Left cardiac atrium (tissue), 4 donors: ENCODE measurements at regions of chr10 and their contacts with region 1.

Region 1: DNA sequence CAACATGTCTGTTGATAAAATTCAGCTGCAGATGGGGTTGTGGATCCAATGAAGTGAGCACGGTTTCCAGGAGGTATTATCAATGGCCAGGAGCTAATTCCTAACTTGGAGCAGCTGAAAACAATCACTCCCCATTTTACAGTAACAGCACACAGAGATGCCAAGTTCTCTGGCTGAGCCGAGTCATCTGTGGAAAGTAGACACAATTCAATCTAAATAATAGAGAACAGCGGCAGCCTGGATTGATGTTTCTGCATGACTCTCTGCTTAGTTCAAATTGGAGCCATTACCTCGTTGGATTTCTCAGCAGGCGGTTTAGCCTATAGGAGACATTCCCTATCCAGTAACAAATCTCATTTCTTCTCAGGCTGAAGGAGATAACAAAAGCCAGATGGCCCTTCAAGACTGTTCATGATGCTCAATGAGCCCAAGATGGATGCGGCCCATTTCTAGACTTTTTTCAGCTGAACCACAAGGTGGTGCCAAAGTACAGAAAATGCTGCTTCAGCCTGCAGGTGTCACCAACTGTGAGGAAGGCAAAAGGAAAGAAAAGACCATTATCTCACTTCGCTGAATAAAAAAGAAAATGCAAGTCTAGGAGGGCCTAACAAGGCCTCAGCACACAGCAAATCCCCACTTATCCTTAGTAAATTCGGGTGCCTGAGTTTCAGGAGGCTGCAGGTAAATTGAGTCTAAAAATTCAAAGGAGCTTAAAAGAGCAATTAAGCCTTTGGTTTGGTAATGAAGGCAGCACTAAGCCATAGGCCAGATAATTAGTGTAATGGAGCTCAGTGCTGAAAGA is 83.7 kb downstream of the SLC16A9 start:
- DNase-seq: no peak
- ATAC-seq: peak; percentile 73 to 84

Region 2: DNA sequence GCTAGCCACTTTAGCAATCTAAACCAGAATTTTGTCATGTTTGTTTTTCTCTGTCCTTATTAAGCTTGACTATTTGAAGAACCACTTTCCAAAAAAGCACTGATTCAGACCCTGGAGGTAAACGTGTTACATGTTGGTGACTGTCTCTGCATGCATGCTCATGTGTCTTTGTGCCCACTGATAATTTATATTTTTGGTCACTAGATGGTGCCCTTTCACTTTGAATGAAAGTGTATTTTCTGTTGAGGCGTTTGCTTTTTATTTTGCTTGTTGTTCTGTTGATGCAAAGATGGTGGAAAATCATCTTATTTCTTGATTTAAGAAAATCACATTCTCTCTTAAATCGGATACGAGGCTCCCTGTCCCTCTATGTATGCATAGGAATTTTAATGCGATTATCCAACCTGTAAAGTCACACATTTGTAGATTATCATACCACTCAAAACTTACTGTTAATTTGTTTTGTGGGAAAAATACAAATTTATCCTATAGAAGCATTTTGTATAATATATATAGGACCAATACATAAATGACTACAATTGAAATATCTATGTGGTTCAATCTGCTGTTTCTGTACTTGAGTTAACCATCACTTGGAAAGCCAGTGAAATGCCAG is 843.9 kb before region 1 on chr10:
- intact Hi-C with region 1: loop called in 1 of 2 experiments (anchors 10 kb)
- DNase-seq: no peak
- ATAC-seq: peak; percentile 14 to 51

Region 3: DNA sequence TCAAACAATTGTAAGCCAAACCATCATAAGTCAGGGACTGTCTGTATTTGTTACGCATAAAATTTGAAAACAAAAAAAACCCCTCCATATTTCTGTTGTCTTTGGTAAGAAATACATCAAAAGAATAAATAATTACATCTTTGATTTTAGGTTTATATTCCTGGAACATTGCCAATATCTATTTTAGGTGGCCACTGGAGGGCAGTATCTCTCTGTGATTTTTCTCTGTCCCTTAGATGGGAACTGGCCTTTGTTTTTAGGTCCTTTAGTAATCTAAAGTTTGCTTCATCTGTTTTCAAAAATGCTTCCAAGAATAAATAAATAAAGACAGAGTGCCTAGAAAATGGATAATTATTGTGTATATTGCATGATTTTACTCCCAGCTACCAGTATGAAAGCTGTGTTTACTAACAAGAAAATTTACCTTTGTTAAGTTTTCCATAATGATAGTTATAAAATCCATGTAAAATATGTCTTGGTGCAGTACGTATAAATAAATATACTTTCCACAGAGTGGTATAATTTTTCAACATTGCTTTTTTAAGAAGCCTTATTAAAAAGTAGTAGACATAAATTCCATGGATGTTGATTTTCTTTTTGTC is 385.2 kb before region 1 on chr10:
- intact Hi-C with region 1: loop called in 1 of 2 experiments (anchors 2 kb)
- DNase-seq: no peak
- ATAC-seq: no peak

Region 4: DNA sequence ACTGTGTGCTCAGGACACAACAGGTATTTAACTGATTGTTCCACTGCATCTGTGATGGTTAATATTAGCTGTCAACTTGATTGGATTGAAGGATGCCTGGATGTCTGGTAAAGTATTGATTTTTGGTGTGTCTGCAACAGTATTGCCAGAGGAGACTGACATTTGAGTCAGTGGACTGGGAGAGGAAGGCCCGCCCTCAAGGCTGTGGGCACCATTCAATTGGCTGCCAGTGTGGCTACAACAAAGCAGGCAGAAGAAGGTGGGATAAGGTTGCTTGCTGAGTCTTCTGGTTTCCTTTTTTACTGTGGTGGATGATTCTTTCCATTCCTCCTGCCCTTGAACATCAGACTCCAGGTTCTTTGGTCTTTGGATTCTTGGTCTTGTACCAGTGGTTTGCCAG is 126.5 kb before region 1 on chr10:
- intact Hi-C with region 1: no loop called
- DNase-seq: no peak
- ATAC-seq: no peak

Region 5: GRCh38 chr10:59814878-59815277 is 189.0 kb after region 1 on chr10:
- intact Hi-C with region 1: loop called in 1 of 2 experiments (anchors 5 kb)
- DNase-seq: no peak
- ATAC-seq: no peak

Region 6: GRCh38 chr10:59906417-59907202 is 280.7 kb after region 1 on chr10 and contains the start of gene CCDC6:
- intact Hi-C with region 1: loop called in 1 of 2 experiments (anchors 5 kb)
- DNase-seq: peak; percentile 96
- ATAC-seq: peak; percentile 96
- total RNA-seq, gene CCDC6: 21.0 to 24.3 TPM